ENCODE measurements at regions of chr5 and their contacts with region 1.

Region 1: DNA sequence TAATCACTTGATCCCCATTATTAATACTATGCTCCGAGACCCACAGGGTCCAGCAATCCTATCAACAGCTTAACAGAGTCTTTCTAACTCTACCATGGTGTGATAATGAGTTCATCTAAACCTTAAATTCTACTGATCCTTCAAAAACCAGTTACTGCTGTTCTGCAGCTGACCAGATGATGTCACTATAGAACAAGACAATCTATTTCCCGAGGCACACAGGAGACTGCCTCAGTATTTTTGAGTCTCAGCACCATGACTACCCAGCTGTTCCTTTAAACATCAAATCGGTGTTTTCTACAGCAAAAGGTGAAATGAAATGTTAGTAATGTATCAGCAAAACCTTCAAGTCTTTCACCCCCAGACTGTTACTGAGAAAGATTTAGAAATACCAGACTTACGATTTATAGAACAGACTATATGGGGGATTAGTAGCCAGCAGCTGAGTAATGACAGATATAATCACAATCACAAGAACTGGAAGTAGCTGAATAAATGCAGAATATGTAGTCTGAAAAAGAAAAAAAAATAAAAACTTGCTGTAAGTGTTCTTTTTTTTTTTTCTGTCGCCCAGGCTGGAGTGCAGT is 16.9 kb downstream of the DNAJC18 start:
- DNase-seq: peak; percentile 85
- CTCF ChIP-seq: peak; percentile 85

Region 2: DNA sequence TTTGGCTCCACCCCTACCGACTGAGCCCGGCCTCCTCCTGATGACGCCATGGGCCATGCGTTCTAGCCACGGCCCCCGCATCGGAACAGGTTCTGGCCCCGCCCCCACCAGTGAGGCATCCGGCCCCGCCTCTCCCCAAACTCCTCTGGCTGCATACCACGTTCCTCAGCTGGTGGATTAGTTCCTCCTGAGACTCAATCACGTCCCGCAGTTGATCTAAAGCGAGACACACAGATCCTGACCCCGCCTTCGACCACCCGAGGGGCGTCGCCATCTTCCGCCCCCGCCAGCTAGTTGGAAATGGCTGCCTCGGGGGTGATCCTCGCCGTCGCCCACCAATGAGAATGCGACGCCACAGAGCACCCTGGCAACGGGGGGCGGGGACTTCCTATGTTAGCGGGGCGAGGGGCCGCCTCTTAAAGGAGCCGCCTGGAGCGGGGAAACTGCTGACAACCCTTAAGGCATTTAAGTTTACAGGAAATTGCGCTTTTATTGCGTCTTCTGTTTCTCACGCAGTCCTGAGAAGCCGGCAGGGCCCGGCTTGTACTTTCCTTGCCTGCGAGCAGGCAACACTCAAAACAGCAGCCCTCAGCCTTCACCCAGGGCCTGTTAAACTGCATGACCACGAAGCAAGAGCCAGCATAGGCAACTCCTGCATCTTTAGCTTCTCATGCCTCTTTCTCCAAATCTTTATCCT is 18.5 kb before region 1 on chr5 and contains the start of gene SPATA24:
- CTCF ChIA-PET with region 1: interaction called, 34 read pairs
- POLR2A ChIA-PET with region 1: no interaction called
- DNase-seq: peak; percentile 97
- CTCF ChIP-seq: no peak

Region 3: DNA sequence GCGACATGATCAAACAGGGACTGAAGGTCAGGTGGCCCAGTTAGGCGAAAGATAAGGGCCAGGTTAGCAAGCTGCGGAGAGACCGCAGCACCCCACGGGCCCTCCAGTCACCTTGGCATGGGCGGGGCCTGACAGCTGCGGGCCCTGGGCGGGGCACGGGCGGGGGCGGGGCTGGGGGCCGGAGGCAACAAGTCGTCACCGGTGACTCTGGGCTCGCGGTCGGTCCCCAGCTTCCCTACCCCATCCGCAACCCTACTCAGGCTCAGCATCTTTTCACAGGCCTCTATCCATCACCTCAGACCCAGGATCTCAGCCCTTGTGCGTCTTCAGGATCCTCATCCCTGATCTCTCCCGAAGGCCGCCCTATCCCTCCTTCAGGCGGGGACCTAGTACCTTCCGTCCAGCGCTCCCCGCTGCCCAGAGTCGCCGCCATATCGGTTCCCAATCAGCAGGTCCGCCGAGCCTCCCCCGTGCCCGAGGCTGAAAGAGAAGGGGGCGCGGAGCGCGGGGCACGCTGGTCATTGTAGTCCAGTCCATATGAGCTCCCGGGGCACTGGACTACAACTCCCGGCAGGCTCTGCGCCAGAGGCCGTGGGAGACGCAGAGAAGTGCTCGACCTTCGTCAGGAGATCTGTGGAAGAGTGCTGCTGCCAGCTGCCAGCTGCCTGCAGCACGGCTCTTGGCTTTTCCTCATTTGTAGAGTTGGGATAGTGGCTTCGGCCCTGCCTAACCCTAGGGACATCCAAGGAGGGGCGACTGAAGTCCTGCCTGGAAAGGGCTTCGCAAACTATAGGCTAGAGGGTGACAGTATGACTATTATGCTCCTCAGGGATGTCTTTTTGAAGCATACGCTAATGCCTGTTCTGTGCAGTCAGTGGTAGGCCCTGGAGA is 16.9 kb after region 1 on chr5 and contains the start of gene DNAJC18:
- CTCF ChIA-PET with region 1: interaction called, 90 read pairs
- POLR2A ChIA-PET with region 1: no interaction called
- DNase-seq: peak; percentile 94
- CTCF ChIP-seq: no peak

Region 4: DNA sequence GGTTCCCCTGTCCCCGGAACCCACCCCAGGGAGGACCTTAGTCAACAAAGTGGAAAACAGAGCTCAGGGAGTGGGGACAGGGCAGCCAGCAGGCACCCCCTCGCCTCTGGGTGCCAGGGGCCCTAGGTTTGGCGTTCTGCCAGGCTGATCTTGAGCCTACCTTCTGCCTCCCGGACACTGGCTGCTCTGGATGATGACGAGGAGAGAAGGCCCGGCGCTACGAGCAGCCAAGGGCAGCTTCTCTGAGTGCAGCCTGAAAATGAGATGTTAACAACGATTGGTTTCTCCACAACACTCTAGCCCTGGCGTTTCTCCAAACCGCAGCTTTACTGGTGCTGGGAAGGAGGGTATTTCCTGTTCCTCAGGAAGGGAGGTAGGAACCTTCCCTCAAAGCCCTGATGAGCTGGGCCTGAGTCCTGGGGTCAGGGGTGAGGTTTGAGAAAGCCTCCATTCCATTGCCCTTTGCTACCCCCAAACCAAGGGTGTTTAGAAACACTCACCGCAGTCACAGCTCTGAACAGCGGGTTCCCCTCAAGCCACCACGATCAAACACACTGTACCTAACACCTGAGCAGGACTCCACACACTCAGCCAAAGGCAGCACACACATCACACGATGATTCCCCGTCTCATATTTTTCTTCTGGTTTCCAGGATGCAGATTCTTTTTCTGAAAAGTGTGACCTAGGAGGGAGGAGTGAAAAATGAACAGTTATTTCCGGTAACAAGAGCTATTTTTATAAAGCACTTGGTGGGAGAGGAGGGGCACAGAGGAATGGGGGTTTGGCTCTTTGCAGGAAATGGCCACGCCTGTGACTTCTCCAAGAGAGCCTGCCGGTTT is 59.9 kb after region 1 on chr5 and contains the start of gene STING1:
- CTCF ChIA-PET with region 1: interaction called, 10 read pairs
- POLR2A ChIA-PET with region 1: no interaction called
- DNase-seq: peak; percentile 66
- CTCF ChIP-seq: no peak

Region 5: DNA sequence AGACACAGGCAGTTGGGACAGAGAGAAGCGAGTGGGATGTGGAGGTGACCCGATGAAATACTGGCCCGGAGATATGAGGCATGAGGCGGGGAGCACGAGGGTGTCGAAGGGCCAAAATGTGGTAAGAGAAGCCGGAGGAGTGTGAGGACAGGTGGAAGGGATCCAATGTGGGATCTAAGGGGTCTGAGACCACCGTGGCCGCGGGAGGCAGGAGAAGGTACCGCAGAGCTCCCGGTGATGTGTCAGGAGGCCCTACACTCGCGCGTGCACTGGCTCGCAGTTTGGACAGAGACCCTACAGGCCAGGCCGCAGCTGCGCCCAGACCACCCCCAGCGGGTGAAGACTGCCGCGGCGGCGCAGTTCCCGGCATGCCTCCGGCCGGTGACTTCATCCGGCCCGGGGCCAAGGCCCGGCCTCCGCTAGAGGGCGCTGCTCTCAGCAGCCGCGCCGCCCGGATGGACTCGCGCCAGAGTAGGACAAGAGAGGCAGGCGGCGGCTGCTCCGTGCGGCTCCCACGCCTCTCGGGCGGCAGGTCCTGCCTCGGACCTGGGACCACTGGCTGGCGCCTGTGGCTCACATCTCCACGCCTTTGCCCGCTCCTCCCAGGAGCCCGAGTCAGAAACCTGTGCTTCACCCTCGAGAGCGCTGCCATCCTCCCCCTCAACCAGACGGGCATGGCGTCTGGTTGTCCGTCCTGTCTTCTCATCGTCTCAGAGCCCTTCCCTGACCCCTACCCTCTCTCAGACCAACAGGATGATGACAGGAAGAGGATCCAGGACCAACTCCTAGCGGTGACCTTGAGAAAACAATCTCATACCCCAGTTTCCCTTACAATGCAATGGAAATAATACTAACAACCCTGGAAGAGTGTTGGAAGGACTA is 95.5 kb after region 1 on chr5:
- CTCF ChIA-PET with region 1: interaction called, 504 read pairs
- POLR2A ChIA-PET with region 1: no interaction called
- DNase-seq: peak; percentile 95
- CTCF ChIP-seq: peak; percentile 97

Region 6: DNA sequence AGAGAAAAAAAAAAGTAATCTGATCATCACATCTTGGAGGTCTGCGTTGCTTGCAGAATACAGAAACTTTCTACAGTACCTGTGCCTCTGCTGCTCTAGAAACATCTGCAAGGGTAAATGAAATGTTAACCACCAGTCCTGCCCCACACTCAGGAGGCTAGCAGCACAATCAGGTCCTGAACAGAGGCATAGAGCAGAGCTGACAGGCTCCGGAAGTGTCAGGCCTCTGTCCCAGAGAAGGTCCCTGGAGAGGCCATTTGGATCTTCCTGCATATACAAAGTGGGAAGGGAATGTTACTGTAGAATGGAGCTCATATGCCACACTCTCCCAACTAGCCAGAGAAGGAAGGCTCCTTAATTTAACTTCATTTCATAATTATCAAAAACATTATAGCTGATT is 613.5 kb after region 1 on chr5:
- CTCF ChIA-PET with region 1: no interaction called
- POLR2A ChIA-PET with region 1: no interaction called
- DNase-seq: no peak
- CTCF ChIP-seq: no peak